ENCODE measurements at regions of chr3 and their contacts with region 1.

Region 1: DNA sequence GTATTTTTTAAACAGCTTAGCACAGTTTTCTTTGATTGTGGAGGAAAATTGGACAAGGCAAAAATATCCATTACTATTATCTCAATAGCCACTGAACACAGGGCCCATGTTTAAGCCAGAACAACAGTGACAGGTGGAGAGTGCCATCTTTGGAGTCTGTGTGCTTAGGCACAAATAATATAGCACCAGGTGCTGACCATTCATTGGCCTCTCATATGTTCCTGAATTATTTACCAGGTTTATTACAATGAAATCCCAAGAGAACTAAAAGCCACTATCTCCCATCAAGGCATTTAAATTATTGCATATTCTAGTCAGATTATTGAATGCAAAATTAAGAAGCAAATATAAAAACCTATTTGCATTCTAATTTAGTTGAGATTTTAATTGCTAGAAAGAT is 39.6 kb downstream of the GPR156 start:
- DNase-seq: no peak
- H3K4me3 ChIP-seq: no peak overlapping the region
- H3K27ac ChIP-seq: no peak overlapping the region
- H3K27me3 ChIP-seq: no peaks in the 10 kb centered on the region
- CTCF ChIP-seq: no peak

Region 2: DNA sequence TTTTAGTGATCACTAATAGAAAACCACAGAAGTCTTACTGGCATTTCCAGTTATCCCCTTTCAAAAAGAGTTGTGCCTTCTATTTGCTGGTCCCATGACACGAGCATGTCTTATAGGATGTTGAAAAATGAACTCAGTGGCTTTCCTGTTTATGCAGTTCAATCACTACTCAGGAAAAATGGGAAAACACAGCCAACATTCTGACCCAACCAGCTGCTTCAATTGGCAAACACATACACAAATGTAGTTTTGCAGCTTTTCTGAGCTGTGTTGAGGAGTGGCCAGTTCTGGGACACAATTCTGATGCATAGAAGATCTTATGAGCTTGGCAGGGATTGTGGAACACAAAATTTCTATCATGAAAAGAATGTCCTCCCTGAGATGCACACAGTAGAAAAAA is 165.2 kb after region 1 on chr3:
- CTCF ChIA-PET with region 1: interaction called, 96 read pairs
- POLR2A ChIA-PET with region 1: no interaction called
- DNase-seq: no peak
- H3K4me3 ChIP-seq: no peak overlapping the region
- H3K27ac ChIP-seq: no peak overlapping the region
- H3K27me3 ChIP-seq: no peaks in the 10 kb centered on the region
- CTCF ChIP-seq: no peak

Region 3: GRCh38 chr3:120438665-120439370 is 193.4 kb after region 1 on chr3:
- CTCF ChIA-PET with region 1: interaction called, 14 read pairs
- POLR2A ChIA-PET with region 1: no interaction called
- DNase-seq: peak; percentile 71
- H3K4me3 ChIP-seq: no peak overlapping the region; the same call in 1 of the 2 replicates
- H3K27ac ChIP-seq: peak overlapping the region; percentile 82
- H3K27me3 ChIP-seq: no peaks in the 10 kb centered on the region
- CTCF ChIP-seq: no peak

Measured in AG04450 (cell line).